Activated T-helper 1 cell treated with anti-CD3 and anti-CD28 coated beads, Interleukin-12 subunit alpha, Interleukin-12 subunit beta, Interleukin-2, Interleukin-4 antibody, amounts not matched to agents 30 ng/mL and 10 ng/mL and 1 ng/mL, durations not matched to agents 14 hours and 24 hours and 36 hours (primary cell): ENCODE measurements at regions of chr6 and their contacts with region 1.

Region 1: GRCh38 chr6:122381497-122382265 is 17.8 kb upstream of the HSF2 start:
- DNase-seq: peak; percentile 38
- H3K4me3 Mint-ChIP-seq: no peak overlapping the region
- H3K27ac Mint-ChIP-seq: no peak overlapping the region
- H3K4me1 Mint-ChIP-seq: no peaks in the 10 kb centered on the region
- H3K27me3 Mint-ChIP-seq: peaks cover 14% of the 10 kb centered on the region

Region 2: GRCh38 chr6:122422614-122423267 is 41.1 kb after region 1 on chr6:
- intact Hi-C with region 1: loop called (anchors 5 kb)
- DNase-seq: no peak
- H3K4me3 Mint-ChIP-seq: no peak overlapping the region
- H3K27ac Mint-ChIP-seq: no peak overlapping the region
- H3K4me1 Mint-ChIP-seq: peaks cover 14% of the 10 kb centered on the region
- H3K27me3 Mint-ChIP-seq: no peaks in the 10 kb centered on the region

Region 3: GRCh38 chr6:122530440-122531046 is 148.9 kb after region 1 on chr6:
- intact Hi-C with region 1: loop called (anchors 1 kb)
- DNase-seq: peak; percentile 50
- H3K4me3 Mint-ChIP-seq: no peak overlapping the region
- H3K27ac Mint-ChIP-seq: no peak overlapping the region
- H3K4me1 Mint-ChIP-seq: no peaks in the 10 kb centered on the region
- H3K27me3 Mint-ChIP-seq: peaks cover 28% of the 10 kb centered on the region